PC-9 (cell line): ENCODE measurements at regions of chr13 and their contacts with region 1.

Region 1: GRCh38 chr13:40789275-40790133 is at the start of gene SLC25A15:
- DNase-seq: peak; percentile 66 to 88
- H3K4me3 ChIP-seq: peak within 1 kb of the TSS; percentile 94
- H3K27ac ChIP-seq: peak within 1 kb of the TSS; percentile 72
- H3K4me1 ChIP-seq: peaks cover 6% of the 10 kb centered on the region; the same call in 1 of the 2 replicates
- H3K27me3 ChIP-seq: no peaks in the 10 kb centered on the region
- CTCF ChIP-seq: no peak
- total RNA-seq, gene SLC25A15: 7.2 and 10.9 TPM in 2 replicates

Region 2: DNA sequence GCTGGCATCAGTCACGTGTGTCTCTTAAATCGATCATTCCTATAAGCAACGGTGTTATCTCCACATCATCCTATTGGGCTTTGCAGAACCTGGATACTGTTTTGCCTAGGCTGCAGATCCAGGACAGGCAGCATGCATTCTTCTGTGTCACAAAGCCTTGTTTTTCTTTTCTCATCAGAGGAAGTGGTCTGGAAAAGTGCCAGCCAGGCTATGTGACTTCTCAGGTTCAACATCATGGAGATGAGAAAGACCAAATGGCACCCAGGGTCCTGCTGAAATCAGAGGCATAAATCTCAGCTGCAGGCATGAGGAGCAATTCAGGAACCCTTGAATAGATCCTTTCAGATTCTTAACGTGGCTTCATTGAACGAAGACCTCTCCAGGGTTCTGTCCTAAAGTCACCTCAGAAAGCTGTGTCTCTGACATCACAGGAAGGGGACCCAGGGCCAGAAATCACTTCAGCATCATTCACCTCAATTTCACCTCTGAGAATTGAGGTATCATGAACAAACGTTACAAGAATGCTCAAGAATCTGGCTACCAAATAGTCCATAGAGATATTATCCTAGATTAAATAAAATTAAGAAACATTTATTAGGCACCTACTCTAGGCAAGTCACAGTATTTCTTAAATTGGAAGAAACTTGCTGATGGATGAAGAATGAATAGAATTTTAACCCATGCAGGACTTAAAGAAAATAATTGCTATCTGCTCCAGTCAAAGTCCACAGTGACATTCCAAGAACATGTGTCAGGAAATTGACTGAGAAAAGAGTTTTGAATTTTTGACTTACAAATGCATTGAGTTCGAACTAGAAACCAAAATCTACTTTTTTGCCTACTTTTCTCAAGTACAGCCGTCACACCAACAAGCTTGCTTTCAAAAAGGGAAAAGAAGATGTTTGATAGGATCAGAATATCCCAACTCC is 1009.9 kb before region 1 on chr13:
- CTCF ChIA-PET with region 1: interaction called, 11 read pairs
- POLR2A ChIA-PET with region 1: no interaction called
- intact Hi-C with region 1: no loop called
- DNase-seq: no peak
- H3K4me3 ChIP-seq: no peak overlapping the region
- H3K27ac ChIP-seq: no peak overlapping the region
- H3K4me1 ChIP-seq: no peaks in the 10 kb centered on the region; the same call in 1 of the 2 replicates
- H3K27me3 ChIP-seq: no peaks in the 10 kb centered on the region
- CTCF ChIP-seq: no peak

Region 3: GRCh38 chr13:40639221-40639681 is 150.3 kb before region 1 on chr13:
- CTCF ChIA-PET with region 1: no interaction called
- POLR2A ChIA-PET with region 1: interaction called, 13 read pairs
- intact Hi-C with region 1: no loop called
- DNase-seq: peak in 1 of 2 experiments; percentile 13
- H3K4me3 ChIP-seq: no peak overlapping the region
- H3K27ac ChIP-seq: no peak overlapping the region
- H3K4me1 ChIP-seq: 0 out of 2 replicates have a peak, but pooled peaks cover 11% of the 10 kb centered on the region
- H3K27me3 ChIP-seq: no peaks in the 10 kb centered on the region
- CTCF ChIP-seq: no peak

Region 4: GRCh38 chr13:40770934-40771618 is 18.4 kb before region 1 on chr13 and contains the start of gene MRPS31:
- CTCF ChIA-PET with region 1: no interaction called
- POLR2A ChIA-PET with region 1: no interaction called
- intact Hi-C with region 1: loop called (anchors 1 kb)
- DNase-seq: peak; percentile 80 to 92
- H3K4me3 ChIP-seq: peak within 1 kb of the TSS; percentile 75
- H3K27ac ChIP-seq: peak within 1 kb of the TSS; percentile 57
- H3K4me1 ChIP-seq: peaks cover 6% of the 10 kb centered on the region; the same call in 1 of the 2 replicates
- H3K27me3 ChIP-seq: no peaks in the 10 kb centered on the region
- CTCF ChIP-seq: no peak
- total RNA-seq, gene MRPS31: 14.5 and 22.2 TPM in 2 replicates

Region 5: GRCh38 chr13:40922437-40923040 is 133.0 kb after region 1 on chr13:
- CTCF ChIA-PET with region 1: no interaction called
- POLR2A ChIA-PET with region 1: no interaction called
- intact Hi-C with region 1: loop called (anchors 1 kb)
- DNase-seq: no peak
- H3K4me3 ChIP-seq: no peak overlapping the region
- H3K27ac ChIP-seq: no peak overlapping the region
- H3K4me1 ChIP-seq: 0 out of 2 replicates have a peak, but pooled peaks cover 4% of the 10 kb centered on the region
- H3K27me3 ChIP-seq: no peaks in the 10 kb centered on the region
- CTCF ChIP-seq: no peak

Region 6: DNA sequence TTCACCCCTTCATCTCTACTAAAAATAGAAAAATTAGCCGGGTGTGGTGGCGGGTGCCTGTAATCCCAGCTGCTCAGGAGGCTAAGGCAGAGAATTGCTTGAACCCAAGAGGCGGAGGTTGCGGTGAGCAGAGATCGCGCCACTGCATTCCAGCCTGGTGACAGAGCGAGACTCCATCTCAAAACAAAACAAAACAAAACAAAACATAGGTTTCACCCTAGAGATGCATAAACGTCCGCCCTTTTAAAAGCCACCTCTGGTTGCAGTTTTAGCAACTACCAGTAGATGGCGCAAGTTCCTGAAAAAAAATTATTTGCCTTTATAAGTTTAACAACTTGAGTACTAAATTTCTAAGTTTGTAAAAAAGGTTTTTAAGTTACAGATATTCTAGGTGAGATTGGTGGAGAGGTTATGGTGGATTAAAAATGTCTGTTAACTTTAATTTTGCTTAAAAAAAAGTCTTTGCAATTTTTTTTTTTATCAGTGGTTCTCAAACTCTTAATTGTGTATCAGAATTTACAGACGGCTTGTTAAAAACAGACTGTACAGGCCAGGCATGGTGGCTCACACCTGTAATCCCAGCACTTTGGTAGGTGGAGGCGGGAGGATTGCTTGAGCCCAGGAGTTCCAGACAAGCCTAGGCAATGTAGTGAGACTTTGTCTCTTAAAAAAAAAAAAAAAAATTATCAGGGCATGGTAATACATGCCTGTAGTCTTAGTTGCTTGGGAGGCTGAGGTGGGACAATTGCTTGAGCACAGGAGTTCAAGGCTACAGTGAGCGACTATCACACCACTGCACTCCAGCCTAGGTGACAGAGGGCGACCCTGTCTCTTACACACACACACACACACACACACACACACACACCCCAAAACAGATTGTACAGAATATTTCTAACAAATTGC is 563.7 kb after region 1 on chr13:
- CTCF ChIA-PET with region 1: no interaction called
- POLR2A ChIA-PET with region 1: no interaction called
- intact Hi-C with region 1: no loop called
- DNase-seq: peak; percentile 38 to 53
- H3K4me3 ChIP-seq: no peak overlapping the region
- H3K27ac ChIP-seq: 0 out of 2 replicates have a peak overlapping the region, but pooled peaks have one; percentile 32
- H3K4me1 ChIP-seq: peaks cover 16% of the 10 kb centered on the region
- H3K27me3 ChIP-seq: no peaks in the 10 kb centered on the region
- CTCF ChIP-seq: peak; percentile 84